ENCODE measurements at regions of chr3 and their contacts with region 1.

Region 1: GRCh38 chr3:45656575-45657363 is 32.4 kb upstream of the SACM1L start:
- DNase-seq: peak; percentile 92
- ATAC-seq: peak; percentile 81

Region 2: DNA sequence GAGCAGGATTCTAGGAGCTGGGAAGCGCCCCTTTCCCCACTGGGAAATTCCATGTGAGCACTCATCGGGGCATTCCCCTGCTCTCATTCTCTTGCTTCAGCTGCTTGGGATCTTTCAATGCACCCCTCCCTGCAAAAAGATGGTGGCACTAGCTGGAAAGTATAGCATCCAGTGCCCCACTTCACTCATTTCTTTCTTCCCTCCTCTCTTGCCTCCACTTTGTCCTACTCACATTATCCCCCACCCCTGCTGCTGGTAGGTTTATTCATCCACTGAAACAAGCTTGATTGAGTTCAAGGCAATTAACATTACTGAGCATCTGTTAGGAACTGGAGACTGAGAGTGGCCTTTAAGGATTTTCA is 147.0 kb before region 1 on chr3:
- intact Hi-C with region 1: loop called (anchors 2 kb)
- DNase-seq: no peak
- ATAC-seq: no peak